HCT116 (cell line): ENCODE measurements at regions of chr2 and their contacts with region 1.

Region 1: DNA sequence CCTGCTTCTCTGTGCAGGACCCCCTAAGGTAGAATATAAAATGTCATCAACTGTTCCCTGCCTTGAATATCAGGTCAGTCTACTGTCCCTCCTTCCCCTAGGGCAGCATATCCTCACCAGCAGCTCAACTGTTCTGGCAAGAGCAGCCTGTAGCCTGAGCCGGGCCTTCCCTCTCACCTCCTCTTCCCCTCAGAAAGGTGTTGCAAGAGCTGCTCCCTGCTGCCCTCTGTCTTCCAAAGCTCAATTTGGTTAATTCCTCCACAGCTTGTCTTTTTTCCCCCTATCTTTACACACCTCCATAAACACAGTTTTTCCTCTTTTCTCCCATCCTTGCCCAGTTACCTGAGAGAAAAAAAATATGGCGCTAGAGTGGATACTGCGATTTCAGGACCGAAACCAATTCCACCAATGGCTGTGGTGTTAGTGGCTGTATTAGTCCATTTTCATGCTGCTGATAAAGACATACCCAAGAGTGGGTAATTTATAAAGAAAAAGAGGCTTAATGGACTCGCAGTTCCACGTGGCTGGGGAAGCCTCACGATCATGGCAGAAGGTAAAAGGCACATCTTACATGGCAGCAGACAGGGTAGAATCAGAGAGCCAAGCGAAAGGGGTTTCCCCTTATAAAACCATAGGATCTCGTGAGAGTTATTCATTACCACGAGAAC is 184.7 kb downstream of the MREG start:
- DNase-seq: peak; percentile 58
- ATAC-seq: peak; percentile 98
- H3K4me3 ChIP-seq: no peak overlapping the region
- H3K27ac ChIP-seq: no peak overlapping the region
- H3K4me1 ChIP-seq: peaks cover 0 to 8% of the 10 kb centered on the region in 2 experiments; a peak in 2 of 4 replicates
- H3K27me3 ChIP-seq: no peaks in the 10 kb centered on the region
- CTCF ChIP-seq: peak; percentile 57 to 81 (median 81); a peak in 5 of 6 replicates
- POLR2A ChIP-seq: no peak
- RAD21 ChIP-seq: peak; percentile 74

Region 2: DNA sequence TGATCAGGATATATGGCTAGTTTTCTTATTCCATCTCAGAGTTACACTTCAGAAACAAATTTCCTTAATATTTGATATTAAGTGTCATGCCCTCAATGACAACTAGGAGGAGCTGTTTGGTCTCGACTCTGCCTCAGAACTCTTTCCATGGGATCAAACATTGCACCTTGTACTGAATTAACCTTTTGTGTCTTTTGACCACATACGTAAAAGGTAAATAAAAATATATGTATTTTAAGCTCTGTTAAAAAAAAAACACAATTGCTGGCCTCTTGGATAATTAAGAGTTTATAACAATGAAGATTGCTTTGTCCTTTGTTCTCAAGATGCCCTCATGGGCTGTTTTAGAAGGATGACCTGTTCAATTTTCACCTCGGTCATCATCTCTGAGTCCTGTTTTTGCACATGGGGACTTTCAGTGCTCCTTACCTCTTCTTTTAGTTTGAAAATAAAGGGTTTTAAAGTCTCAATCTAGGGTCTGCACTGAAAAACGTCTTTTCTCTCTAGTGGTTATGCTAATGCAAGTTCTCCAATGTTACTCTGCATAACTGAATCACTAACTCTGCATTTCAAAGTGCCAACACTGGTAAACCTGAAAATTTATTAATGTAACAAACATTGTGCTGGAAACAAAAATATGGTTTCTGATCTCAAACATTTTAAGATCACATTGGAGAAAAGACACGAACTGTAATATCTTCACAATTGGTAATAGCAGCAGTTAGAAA is 374.0 kb before region 1 on chr2:
- CTCF ChIA-PET with region 1: interaction called, 3 read pairs
- POLR2A ChIA-PET with region 1: no interaction called
- RAD21 ChIA-PET with region 1: no interaction called
- intact Hi-C with region 1: loop called (anchors 1 kb)
- DNase-seq: peak; percentile 12
- ATAC-seq: peak; percentile 64; the same call in 1 of the 2 replicates
- H3K4me3 ChIP-seq: no peak overlapping the region
- H3K27ac ChIP-seq: no peak overlapping the region
- H3K4me1 ChIP-seq: no peaks in the 10 kb centered on the region
- H3K27me3 ChIP-seq: no peaks in the 10 kb centered on the region
- CTCF ChIP-seq: peak; percentile 64 to 75 (median 72); a peak in 5 of 6 replicates
- POLR2A ChIP-seq: no peak
- RAD21 ChIP-seq: peak; percentile 84

Region 3: DNA sequence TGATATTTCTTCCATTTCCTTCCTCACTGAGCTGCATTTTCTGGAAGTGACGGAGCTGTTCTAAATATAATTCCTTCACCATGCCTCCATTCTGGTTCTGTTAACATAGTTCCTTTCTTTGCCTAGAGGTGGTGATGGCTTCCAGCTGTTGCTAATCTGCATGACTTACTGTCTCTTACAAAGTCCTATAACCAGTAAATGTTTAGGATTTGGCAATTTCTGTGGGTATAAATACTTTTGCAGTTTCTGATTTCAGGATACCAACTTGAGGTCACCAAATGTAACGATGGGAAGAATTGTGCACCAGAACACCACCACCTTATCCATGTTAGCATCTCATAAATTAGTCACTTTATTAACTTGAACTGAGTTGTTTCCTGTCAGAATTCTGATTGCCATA is 291.0 kb before region 1 on chr2:
- CTCF ChIA-PET with region 1: no interaction called
- POLR2A ChIA-PET with region 1: no interaction called
- RAD21 ChIA-PET with region 1: no interaction called
- intact Hi-C with region 1: loop called (anchors 10 kb)
- DNase-seq: no peak
- ATAC-seq: no peak
- H3K4me3 ChIP-seq: no peak overlapping the region
- H3K27ac ChIP-seq: no peak overlapping the region
- H3K4me1 ChIP-seq: no peaks in the 10 kb centered on the region
- H3K27me3 ChIP-seq: no peaks in the 10 kb centered on the region
- CTCF ChIP-seq: no peak
- POLR2A ChIP-seq: no peak
- RAD21 ChIP-seq: no peak

Region 4: DNA sequence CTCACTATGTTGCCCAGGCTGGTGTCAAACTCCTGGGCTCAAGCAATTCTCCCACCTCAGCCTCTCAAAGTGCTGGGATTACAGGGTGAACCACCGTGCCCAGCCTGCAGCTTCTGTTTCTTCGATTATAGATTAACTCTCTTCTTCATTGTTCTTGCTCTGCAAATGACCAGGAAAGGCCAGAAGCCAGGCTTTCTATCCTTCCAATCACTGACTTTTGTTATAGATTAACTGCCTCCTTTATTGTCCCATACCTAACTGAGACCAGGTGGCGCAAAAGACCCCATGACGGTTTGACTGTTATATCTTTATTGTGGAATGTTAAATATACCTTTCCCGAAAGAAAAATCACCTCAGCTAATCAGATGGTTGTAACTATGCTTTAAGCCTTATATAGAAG is 12.2 kb before region 1 on chr2:
- CTCF ChIA-PET with region 1: interaction called, 14 read pairs
- POLR2A ChIA-PET with region 1: interaction called, 3 read pairs
- RAD21 ChIA-PET with region 1: no interaction called
- intact Hi-C with region 1: no loop called
- DNase-seq: no peak
- ATAC-seq: no peak
- H3K4me3 ChIP-seq: no peak overlapping the region
- H3K27ac ChIP-seq: no peak overlapping the region
- H3K4me1 ChIP-seq: no peaks in the 10 kb centered on the region
- H3K27me3 ChIP-seq: no peaks in the 10 kb centered on the region
- CTCF ChIP-seq: no peak
- POLR2A ChIP-seq: no peak
- RAD21 ChIP-seq: no peak

Region 5: GRCh38 chr2:215841175-215841816 is 12.6 kb after region 1 on chr2:
- CTCF ChIA-PET with region 1: interaction called, 21 read pairs
- POLR2A ChIA-PET with region 1: no interaction called
- RAD21 ChIA-PET with region 1: no interaction called
- intact Hi-C with region 1: no loop called
- DNase-seq: no peak
- ATAC-seq: no peak
- H3K4me3 ChIP-seq: no peak overlapping the region
- H3K27ac ChIP-seq: no peak overlapping the region
- H3K4me1 ChIP-seq: peaks cover 0 to 12% of the 10 kb centered on the region in 2 experiments; a peak in 1 of 4 replicates
- H3K27me3 ChIP-seq: no peaks in the 10 kb centered on the region
- CTCF ChIP-seq: no peak
- POLR2A ChIP-seq: no peak
- RAD21 ChIP-seq: no peak